Vagina (tissue), 2 donors: ENCODE measurements at regions of chr2 and their contacts with region 1.

Region 1: GRCh38 chr2:28392297-28393113 is at the start of gene FOSL2:
- DNase-seq: peak in 1 of 2 donors; percentile 99
- H3K4me3 ChIP-seq: peak within 1 kb of the TSS; percentile 89 to 93
- H3K27ac ChIP-seq: peak within 1 kb of the TSS; percentile 100
- H3K4me1 ChIP-seq: peaks cover 19% of the 10 kb centered on the region
- H3K27me3 ChIP-seq: no peaks in the 10 kb centered on the region
- CTCF ChIP-seq: no peak
- POLR2A ChIP-seq: peak; percentile 43 to 98
- total RNA-seq, gene FOSL2: 213 TPM

Region 2: DNA sequence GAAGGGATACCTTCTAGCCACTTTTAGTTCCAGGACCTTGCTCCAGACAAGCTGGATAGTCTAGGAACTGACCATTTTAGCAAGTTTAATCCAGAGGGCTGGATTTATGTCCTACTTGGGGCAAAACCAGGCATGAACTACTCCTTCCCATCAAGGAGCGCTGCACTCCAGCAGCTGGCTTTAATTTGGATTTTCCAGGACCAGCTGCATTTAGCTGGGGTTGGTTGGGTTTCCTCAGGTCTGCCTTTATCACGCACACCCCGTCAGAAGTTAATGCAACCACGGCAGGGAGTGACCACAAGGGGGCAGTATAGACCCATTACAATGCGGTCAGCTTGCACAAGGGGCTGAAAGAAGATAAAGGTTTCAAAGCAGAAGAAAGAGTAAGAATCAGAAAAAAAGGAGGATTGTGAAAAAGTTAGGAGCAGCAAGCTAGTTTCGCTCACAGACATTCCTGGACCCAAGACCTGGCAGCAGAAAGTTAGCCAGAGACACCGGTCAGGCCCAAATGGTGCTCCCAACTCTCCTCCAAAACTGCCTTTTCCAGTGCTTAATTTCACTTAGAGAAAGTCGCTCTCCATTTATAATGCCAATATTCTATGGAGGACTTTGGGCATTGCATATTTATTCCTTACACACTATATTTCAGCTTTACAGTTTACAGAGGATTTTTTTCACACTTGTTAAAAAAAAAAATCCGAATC is 688.7 kb before region 1 on chr2:
- intact Hi-C with region 1: loop called (anchors 5 kb)
- DNase-seq: no peak
- H3K4me3 ChIP-seq: no peak overlapping the region
- H3K27ac ChIP-seq: peak overlapping the region; percentile 87
- H3K4me1 ChIP-seq: peaks cover 23% of the 10 kb centered on the region
- H3K27me3 ChIP-seq: no peaks in the 10 kb centered on the region
- CTCF ChIP-seq: peak; percentile 91 to 95 (median 94)
- POLR2A ChIP-seq: no peak

Region 3: DNA sequence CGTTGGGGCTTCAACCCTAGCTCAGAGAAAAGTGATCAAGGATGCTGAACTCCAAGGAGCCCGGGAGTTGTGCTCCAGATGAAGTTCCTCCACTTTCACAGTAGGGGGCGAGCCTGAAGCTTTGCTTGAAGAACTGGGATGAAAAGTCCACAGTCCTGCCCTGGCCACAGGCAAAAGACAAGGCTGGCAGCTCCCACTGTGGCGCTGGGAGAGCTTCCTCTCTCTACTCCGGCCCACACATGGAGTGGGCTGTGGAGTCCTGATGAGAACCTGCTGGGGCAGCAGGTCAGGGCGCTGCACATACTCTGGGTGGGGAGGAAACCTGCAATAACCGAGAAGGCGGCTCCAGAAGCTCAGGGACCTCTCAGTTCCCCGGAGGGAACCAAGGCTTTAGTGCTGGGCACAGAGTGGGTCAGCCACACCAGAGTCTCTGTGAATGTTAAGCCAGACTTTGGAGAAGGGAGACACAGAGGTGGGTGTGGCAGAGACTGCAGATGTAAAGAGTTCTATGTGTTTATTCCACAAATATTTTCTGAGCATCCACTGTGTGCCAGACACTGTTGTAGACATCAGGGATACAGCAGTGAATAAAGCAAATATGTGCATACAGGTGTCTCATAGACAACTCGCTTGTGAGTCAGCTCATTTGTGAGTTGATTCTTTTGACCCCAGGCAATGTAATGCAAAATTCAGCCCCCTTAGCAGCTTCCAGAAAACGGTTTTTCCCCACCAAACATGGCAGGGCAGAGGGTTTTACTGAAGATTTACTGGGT is 668.9 kb before region 1 on chr2:
- intact Hi-C with region 1: loop called (anchors 5 kb)
- DNase-seq: no peak
- H3K4me3 ChIP-seq: no peak overlapping the region
- H3K27ac ChIP-seq: peak overlapping the region; percentile 42
- H3K4me1 ChIP-seq: peaks cover 13% of the 10 kb centered on the region
- H3K27me3 ChIP-seq: no peaks in the 10 kb centered on the region
- CTCF ChIP-seq: peak; percentile 56 to 82 (median 70)
- POLR2A ChIP-seq: no peak

Region 4: GRCh38 chr2:27890146-27890923 is 502.2 kb before region 1 on chr2 and contains the starts of genes BABAM2 and RBKS:
- intact Hi-C with region 1: loop called (anchors 2 kb)
- DNase-seq: peak in 1 of 2 donors; percentile 92
- H3K4me3 ChIP-seq: peak within 1 kb of the TSS; percentile 59 to 91
- H3K27ac ChIP-seq: peak within 1 kb of the TSS; percentile 84
- H3K4me1 ChIP-seq: peaks cover 19% of the 10 kb centered on the region
- H3K27me3 ChIP-seq: no peaks in the 10 kb centered on the region
- CTCF ChIP-seq: peak in 1 of 3 experiments; percentile 5
- POLR2A ChIP-seq: peak in 1 of 2 donors; percentile 75
- total RNA-seq, gene BABAM2: 41.0 TPM
- total RNA-seq, gene RBKS: 2.2 TPM

Region 5: DNA sequence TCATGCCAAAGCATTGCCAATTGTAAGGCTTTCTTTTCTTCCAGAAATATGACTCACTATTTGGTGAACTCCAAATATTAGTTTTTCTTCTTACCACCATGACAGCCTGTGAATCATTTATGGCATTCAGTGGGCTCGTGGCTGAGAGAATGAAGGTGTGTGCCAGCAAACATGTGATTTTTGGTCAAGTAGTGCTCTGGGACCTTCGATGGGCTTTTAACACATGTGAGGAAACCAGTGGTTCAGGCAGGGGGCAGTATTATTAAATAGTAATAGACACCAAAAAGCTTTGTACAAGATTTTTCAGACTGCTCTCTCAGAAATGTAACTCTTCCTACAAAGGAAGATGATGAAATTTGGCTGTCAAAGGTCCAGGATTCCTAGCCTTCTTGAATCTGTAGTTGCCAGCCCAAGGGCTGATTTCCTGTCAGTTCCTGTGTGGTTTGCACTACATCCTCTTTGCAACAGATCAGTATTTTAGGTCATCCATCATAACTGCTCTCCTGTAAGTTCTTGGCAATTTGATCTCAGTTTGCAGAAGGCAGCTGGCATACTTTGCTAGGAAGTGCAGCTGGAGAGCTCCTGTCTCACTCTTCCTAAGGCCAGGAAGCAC is 437.6 kb before region 1 on chr2:
- intact Hi-C with region 1: loop called (anchors 5 kb)
- DNase-seq: peak in 1 of 2 donors; percentile 92
- H3K4me3 ChIP-seq: no peak overlapping the region
- H3K27ac ChIP-seq: peak overlapping the region; percentile 70
- H3K4me1 ChIP-seq: peaks cover 49% of the 10 kb centered on the region
- H3K27me3 ChIP-seq: no peaks in the 10 kb centered on the region
- CTCF ChIP-seq: peak; percentile 12 to 49 (median 31)
- POLR2A ChIP-seq: no peak

Region 6: DNA sequence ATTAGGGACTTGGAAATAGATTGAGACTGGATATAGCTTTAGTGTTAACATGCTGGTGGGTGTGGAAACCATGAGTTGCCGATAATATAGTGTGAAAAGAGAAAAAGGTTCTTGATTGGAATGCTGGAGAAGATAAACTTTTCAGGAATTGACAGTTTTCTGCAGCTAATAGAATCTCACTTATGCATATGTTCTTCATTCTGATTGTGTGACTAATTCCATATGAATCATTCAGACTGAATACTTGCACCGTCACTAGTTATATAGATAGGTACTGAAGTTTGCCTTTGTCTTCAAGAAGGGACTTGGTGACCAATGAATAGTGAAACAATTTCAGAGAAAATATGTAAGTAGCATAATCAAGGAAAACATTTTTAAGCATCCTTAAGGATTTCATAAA is 225.5 kb before region 1 on chr2:
- intact Hi-C with region 1: loop called (anchors 5 kb)
- DNase-seq: no peak
- H3K4me3 ChIP-seq: no peak overlapping the region
- H3K27ac ChIP-seq: no peak overlapping the region
- H3K4me1 ChIP-seq: peaks cover 39% of the 10 kb centered on the region
- H3K27me3 ChIP-seq: no peaks in the 10 kb centered on the region
- CTCF ChIP-seq: no peak
- POLR2A ChIP-seq: no peak

Region 7: GRCh38 chr2:28342081-28342967 is 50.2 kb before region 1 on chr2:
- intact Hi-C with region 1: loop called (anchors 1 kb)
- DNase-seq: peak in 1 of 2 donors; percentile 98
- H3K4me3 ChIP-seq: no peak overlapping the region
- H3K27ac ChIP-seq: peak overlapping the region; percentile 82
- H3K4me1 ChIP-seq: peaks cover 98% of the 10 kb centered on the region
- H3K27me3 ChIP-seq: no peaks in the 10 kb centered on the region
- CTCF ChIP-seq: no peak
- POLR2A ChIP-seq: peak in 1 of 2 donors; percentile 18

Region 8: GRCh38 chr2:29351916-29352591 is 959.5 kb after region 1 on chr2:
- intact Hi-C with region 1: no loop called
- DNase-seq: no peak
- H3K4me3 ChIP-seq: no peak overlapping the region
- H3K27ac ChIP-seq: no peak overlapping the region
- H3K4me1 ChIP-seq: no peaks in the 10 kb centered on the region
- H3K27me3 ChIP-seq: no peaks in the 10 kb centered on the region
- CTCF ChIP-seq: no peak
- POLR2A ChIP-seq: no peak